ENCODE measurements at regions of chr12 and their contacts with region 1.

Region 1: GRCh38 chr12:2057041-2057794 is 4.4 kb downstream of the CACNA1C start:
- DNase-seq: peak in 4 of 5 donors; percentile 62 to 69 (median 66)
- H3K4me3 ChIP-seq: no peak overlapping the region
- H3K27ac ChIP-seq: no peak overlapping the region
- H3K4me1 ChIP-seq: peaks cover 4% of the 10 kb centered on the region
- H3K27me3 ChIP-seq: no peaks in the 10 kb centered on the region
- CTCF ChIP-seq: peak in 2 of 3 donors; percentile 30 to 32
- EP300 ChIP-seq: no peak
- POLR2A ChIP-seq: no peak

Region 2: GRCh38 chr12:1855241-1855640 is 202.0 kb before region 1 on chr12:
- intact Hi-C with region 1: no loop called
- DNase-seq: no peak
- H3K4me3 ChIP-seq: no peak overlapping the region
- H3K27ac ChIP-seq: no peak overlapping the region
- H3K4me1 ChIP-seq: no peaks in the 10 kb centered on the region
- H3K27me3 ChIP-seq: no peaks in the 10 kb centered on the region
- CTCF ChIP-seq: no peak
- EP300 ChIP-seq: no peak
- POLR2A ChIP-seq: no peak

Region 3: DNA sequence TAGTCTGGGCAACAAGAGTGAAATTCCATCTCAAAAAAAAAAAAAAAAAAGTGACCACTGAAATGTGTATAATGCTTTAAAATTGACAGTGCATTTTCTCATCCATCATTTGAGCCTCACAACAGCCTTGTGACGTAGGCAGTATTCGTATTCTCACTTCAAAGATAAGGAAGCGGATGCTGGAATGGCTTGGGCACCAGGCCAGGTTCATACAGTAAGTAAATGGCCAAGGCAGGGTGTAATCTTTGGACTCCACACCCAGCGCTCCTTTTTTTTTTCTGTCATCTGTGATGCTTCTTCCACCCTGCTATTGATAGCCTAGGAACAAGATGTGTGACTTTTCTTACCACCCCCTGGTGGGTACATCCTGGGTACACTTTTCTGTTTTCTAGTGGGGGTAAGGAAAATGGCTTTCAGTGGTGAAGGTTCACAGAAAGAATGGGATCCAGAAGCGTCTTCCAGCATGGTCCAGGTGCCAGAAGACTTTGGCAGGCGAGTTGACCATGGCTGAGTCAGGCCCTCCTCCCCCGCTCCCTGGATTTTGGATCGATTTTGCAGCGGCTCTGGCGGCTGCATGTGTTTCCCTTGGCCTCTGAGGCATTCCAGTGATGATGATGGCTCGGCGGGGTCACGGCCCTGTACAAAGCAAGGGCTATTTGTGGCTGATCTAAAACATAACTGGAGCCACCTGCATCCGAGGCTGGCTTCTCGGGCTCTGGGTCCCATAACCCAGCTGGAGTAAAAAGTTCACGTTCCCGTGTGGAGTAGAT is 106.1 kb after region 1 on chr12:
- intact Hi-C with region 1: loop called in 1 of 4 experiments (anchors 10 kb)
- DNase-seq: peak; percentile 89 to 94 (median 91)
- H3K4me3 ChIP-seq: no peak overlapping the region
- H3K27ac ChIP-seq: peak overlapping the region; percentile 51 to 76
- H3K4me1 ChIP-seq: peaks cover 14% of the 10 kb centered on the region
- H3K27me3 ChIP-seq: no peaks in the 10 kb centered on the region
- CTCF ChIP-seq: peak in 1 of 3 donors; percentile 20
- EP300 ChIP-seq: peak; percentile 58
- POLR2A ChIP-seq: no peak

Region 4: GRCh38 chr12:2179953-2180736 is 122.9 kb after region 1 on chr12:
- intact Hi-C with region 1: loop called in 1 of 4 experiments (anchors 10 kb)
- DNase-seq: peak; percentile 73 to 79 (median 74)
- H3K4me3 ChIP-seq: no peak overlapping the region
- H3K27ac ChIP-seq: peak overlapping the region; percentile 20 to 48
- H3K4me1 ChIP-seq: peaks cover 14% of the 10 kb centered on the region
- H3K27me3 ChIP-seq: no peaks in the 10 kb centered on the region
- CTCF ChIP-seq: no peak
- EP300 ChIP-seq: no peak
- POLR2A ChIP-seq: no peak

Region 5: DNA sequence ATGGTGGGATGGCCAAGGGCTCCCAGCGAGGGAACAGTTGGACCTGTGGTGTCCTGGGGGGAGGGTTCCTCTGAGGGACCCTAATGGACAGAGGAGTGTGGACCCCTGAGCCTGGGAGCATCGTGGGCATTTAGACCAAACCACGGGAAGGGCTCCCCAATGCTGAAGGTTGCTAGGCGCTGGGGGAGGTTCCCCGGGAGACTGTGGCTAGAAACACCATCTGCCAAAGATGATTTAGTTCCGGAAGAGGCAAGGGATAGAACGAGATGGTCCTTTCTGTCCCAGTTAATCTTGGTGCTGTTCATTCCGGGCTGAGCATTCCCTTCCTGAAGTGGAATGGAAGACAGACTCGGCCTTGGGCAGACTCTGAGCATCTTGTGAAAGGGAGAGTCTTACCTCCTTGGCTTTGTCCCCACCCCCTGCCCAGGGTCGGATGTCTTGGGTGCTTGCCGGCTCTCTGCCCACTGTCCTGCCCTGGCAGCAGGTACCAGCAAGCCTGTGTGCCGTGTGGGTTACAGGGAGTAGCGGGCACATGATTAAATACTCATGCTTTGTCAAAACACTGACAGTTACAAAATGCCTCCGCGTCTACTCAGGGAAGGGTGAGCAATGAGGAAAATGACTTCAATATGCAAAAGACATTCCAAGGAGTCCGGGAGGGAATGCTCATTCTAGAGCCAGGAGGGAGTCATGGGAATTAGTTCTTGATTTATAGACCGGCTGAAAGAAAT is 211.5 kb after region 1 on chr12:
- intact Hi-C with region 1: loop called in 1 of 4 experiments (anchors 5 kb)
- DNase-seq: no peak
- H3K4me3 ChIP-seq: no peak overlapping the region
- H3K27ac ChIP-seq: no peak overlapping the region
- H3K4me1 ChIP-seq: peaks cover under 1% of the 10 kb centered on the region
- H3K27me3 ChIP-seq: no peaks in the 10 kb centered on the region
- CTCF ChIP-seq: no peak
- EP300 ChIP-seq: no peak
- POLR2A ChIP-seq: no peak

Region 6: DNA sequence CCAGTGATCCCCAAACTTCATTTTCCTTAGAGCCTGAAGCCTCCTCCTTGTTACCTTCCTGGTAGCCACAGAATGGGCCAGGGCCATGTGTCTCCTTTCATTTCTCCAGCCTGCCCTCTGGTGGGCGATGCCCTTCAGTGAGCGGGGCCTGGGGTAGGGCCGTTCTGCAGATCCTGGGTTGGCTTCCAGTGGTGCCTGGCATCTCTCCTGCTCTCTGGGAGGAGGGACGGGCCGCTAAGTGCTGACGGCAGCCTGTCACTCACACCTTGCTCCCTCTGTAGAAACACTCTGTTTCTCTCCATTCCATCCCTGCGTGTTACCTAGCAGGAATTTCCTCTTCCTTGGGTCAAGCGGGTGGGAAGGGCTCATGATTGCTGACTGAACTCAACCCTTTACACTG is 227.6 kb after region 1 on chr12:
- intact Hi-C with region 1: loop called in 2 of 4 experiments (anchors 5 to 10 kb)
- DNase-seq: peak; percentile 57 to 81 (median 72)
- H3K4me3 ChIP-seq: no peak overlapping the region
- H3K27ac ChIP-seq: no peak overlapping the region
- H3K4me1 ChIP-seq: peaks cover 4% of the 10 kb centered on the region
- H3K27me3 ChIP-seq: no peaks in the 10 kb centered on the region
- CTCF ChIP-seq: peak in 2 of 3 donors; percentile 41 to 48
- EP300 ChIP-seq: no peak
- POLR2A ChIP-seq: no peak

Region 7: DNA sequence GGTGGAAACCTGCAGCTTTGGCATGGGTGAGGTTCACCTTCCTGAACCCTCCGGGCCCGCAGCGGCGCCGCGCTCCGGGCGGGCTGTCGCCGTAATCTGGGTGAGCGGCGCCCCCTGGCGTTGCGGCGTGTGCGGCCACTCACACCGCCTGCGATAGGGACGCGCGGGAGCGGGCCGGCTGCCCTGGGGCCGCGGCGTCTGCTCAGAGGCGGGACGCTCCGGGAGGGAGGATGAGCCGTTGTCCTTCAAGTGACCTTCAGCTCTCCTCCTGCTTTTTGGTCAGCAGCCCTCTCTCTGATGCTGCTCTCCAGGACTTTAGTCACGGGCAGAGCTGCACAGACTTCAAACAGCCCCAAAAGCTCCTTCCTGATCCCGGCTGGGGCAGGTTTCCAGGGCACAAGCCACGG is 525.9 kb after region 1 on chr12:
- intact Hi-C with region 1: loop called in 3 of 4 experiments (anchors 5 to 10 kb)
- DNase-seq: peak; percentile 26 to 78 (median 69)
- H3K4me3 ChIP-seq: no peak overlapping the region
- H3K27ac ChIP-seq: no peak overlapping the region
- H3K4me1 ChIP-seq: peaks cover 2% of the 10 kb centered on the region
- H3K27me3 ChIP-seq: no peaks in the 10 kb centered on the region
- CTCF ChIP-seq: peak; percentile 24 to 72 (median 72)
- EP300 ChIP-seq: no peak
- POLR2A ChIP-seq: no peak

Measured in ovary (tissue), 10 donors.